GM12878 (cell line): ENCODE measurements at regions of chr5 and their contacts with region 1.

Region 1: GRCh38 chr5:149667084-149667828 is 62.9 kb upstream of the PPARGC1B start:
- DNase-seq: peak; percentile 38
- ATAC-seq: peak; percentile 90
- H3K4me3 ChIP-seq: no peak overlapping the region
- H3K27ac ChIP-seq: no peak overlapping the region
- H3K4me1 ChIP-seq: no peaks in the 10 kb centered on the region
- H3K27me3 ChIP-seq: no peaks in the 10 kb centered on the region; a peak in 1 of 4 replicates
- CTCF ChIP-seq: peak; percentile 74 to 95 (median 83)
- EP300 ChIP-seq: no peak
- POLR2A ChIP-seq: no peak
- RAD21 ChIP-seq: peak; percentile 75

Region 2: DNA sequence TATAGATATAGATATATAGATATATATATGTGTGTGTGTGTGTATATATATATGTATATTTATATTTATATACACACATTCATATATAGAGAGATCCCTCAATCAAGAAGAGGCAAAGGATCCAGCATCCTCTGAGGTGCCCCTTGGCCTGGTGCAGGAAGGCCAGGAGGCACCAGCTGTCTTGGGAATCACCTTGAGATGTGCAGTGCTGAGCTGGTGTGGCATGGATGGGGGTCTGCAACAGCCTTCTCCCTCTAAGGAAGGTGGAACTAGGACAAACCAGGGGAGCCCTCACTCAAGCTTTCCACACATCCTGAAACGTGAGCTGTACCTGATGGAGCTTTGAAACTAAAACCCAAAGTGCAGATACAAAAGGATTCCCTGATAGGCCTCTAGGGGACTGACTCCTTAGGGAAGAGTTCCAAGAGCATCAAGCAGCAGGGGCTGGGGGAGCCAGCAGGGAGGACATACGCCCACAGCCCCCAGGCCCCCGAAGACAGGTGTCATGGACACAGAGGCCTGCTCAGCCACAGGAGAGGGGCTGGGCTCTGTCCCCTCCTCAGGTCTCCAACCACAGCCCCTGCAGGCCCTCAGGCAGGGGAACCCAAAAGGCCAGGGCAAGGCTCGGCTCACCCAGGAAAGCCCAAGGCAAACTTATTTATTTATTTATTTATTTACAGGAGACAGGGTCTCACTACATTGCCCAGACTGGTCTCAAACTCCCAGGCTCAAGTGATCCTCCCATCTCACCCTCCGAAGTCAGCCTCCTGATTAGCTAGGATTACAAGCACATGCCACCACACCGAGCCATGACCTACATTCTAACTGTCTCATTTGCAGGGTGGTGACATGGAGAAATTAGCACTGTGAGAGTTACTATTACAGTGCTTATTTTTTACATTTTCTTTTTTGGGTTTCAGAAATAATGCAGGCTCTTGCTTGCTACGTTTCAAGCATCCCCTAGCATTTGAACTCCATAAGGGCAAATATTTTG is 68.2 kb before region 1 on chr5:
- CTCF ChIA-PET with region 1: no interaction called
- POLR2A ChIA-PET with region 1: no interaction called
- RAD21 ChIA-PET with region 1: no interaction called
- SMC1A ChIA-PET with region 1: no interaction called
- in situ Hi-C with region 1: no loop called
- intact Hi-C with region 1: no loop called
- DNase-seq: no peak
- ATAC-seq: no peak
- H3K4me3 ChIP-seq: no peak overlapping the region
- H3K27ac ChIP-seq: no peak overlapping the region
- H3K4me1 ChIP-seq: peaks cover 3% of the 10 kb centered on the region; the same call in 1 of the 2 replicates
- H3K27me3 ChIP-seq: no peaks in the 10 kb centered on the region
- CTCF ChIP-seq: no peak
- EP300 ChIP-seq: no peak
- POLR2A ChIP-seq: no peak
- RAD21 ChIP-seq: no peak

Region 3: DNA sequence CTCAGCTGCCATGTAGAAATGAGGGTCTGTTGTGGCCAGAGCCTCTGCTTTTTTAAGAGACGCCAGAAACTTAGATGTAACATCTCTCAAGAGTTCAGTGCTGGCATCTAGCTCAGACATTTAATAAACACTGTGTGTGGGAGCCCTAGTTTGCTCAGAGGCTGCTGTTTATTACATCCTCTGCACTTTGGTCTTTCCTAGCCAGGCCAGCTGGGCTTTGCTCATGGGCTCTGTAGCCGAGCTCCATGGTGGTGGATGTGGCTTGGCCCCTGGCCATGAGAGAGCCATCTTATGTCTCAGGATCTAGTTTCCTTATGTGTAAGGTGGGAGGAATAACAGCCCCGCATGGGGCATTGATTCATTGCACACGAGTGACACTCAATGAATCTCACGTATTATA is 55.9 kb before region 1 on chr5:
- CTCF ChIA-PET with region 1: no interaction called
- POLR2A ChIA-PET with region 1: no interaction called
- RAD21 ChIA-PET with region 1: no interaction called
- SMC1A ChIA-PET with region 1: no interaction called
- in situ Hi-C with region 1: no loop called
- intact Hi-C with region 1: no loop called
- DNase-seq: no peak
- ATAC-seq: no peak
- H3K4me3 ChIP-seq: no peak overlapping the region
- H3K27ac ChIP-seq: no peak overlapping the region
- H3K4me1 ChIP-seq: peaks cover 12% of the 10 kb centered on the region
- H3K27me3 ChIP-seq: no peaks in the 10 kb centered on the region
- CTCF ChIP-seq: no peak
- EP300 ChIP-seq: no peak
- POLR2A ChIP-seq: no peak
- RAD21 ChIP-seq: no peak

Region 4: GRCh38 chr5:149636851-149637246 is 30.4 kb before region 1 on chr5:
- CTCF ChIA-PET with region 1: interaction called, 14 read pairs
- POLR2A ChIA-PET with region 1: no interaction called
- RAD21 ChIA-PET with region 1: interaction called, 4 read pairs
- SMC1A ChIA-PET with region 1: interaction called, 8 read pairs
- in situ Hi-C with region 1: no loop called
- intact Hi-C with region 1: no loop called
- DNase-seq: no peak
- ATAC-seq: peak; percentile 85
- H3K4me3 ChIP-seq: no peak overlapping the region
- H3K27ac ChIP-seq: no peak overlapping the region
- H3K4me1 ChIP-seq: peaks cover 12% of the 10 kb centered on the region
- H3K27me3 ChIP-seq: no peaks in the 10 kb centered on the region
- CTCF ChIP-seq: peak; percentile 74 to 78 (median 77)
- EP300 ChIP-seq: no peak
- POLR2A ChIP-seq: no peak
- RAD21 ChIP-seq: peak; percentile 87

Region 5: DNA sequence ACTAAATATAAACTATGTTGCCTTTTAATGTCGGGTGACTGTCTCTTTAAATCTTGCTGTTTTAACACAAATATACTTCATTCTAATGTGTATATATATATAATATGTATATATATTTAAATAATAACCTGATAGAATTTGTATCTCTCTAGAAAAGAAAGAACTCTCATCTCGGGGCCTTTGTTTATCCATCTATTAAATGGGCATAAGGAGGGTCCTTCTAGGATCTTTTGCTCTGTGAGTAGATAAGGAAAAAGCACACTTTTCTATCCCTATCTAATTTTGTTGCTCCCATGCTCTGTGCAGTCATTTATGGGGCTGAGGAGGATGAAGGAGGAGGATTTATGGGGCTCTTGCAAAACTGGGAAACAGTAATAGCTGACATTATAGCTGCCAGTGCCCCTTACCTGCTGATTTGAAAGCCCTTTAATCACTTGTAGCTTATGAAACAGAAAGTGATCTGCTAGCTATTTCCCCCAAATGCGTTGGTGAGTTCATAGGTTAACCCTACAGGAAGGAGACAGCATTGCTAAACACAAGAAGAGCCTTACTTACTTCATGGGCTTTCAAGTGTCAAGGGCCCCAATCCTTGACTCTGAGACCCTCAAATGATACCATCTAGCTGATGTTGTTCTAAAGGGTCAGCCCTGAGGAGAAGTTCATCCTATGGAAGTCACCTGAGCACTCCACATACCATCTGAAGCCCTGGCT is 57.0 kb after region 1 on chr5:
- CTCF ChIA-PET with region 1: interaction called, 23 read pairs
- POLR2A ChIA-PET with region 1: no interaction called
- RAD21 ChIA-PET with region 1: interaction called, 9 read pairs
- SMC1A ChIA-PET with region 1: interaction called, 12 read pairs
- in situ Hi-C with region 1: no loop called
- intact Hi-C with region 1: no loop called
- DNase-seq: peak; percentile 43
- ATAC-seq: peak; percentile 97
- H3K4me3 ChIP-seq: no peak overlapping the region
- H3K27ac ChIP-seq: peak overlapping the region; percentile 52; the same call in 1 of the 2 replicates
- H3K4me1 ChIP-seq: peaks cover 6% of the 10 kb centered on the region
- H3K27me3 ChIP-seq: no peaks in the 10 kb centered on the region
- CTCF ChIP-seq: no peak
- EP300 ChIP-seq: no peak
- POLR2A ChIP-seq: no peak
- RAD21 ChIP-seq: no peak

Region 6: DNA sequence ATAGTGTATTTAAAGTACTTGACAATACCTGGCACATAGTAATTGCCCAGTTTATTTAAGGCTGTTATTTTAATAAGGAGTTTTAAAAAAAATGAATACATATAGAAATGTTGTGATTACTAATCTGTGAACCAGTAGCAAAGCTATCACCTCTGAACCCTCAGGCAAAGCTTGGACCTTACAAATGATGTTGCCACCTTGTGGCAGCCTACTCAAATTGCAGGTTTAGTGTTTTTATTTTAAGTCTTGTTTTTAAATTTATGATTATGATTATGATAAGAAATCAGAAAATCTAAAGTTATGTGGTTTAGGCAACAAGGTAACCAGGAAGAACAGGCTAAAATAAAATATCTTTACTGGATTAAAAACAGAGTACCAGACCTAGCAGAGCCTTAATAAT is 98.7 kb after region 1 on chr5:
- CTCF ChIA-PET with region 1: interaction called, 9 read pairs
- POLR2A ChIA-PET with region 1: no interaction called
- RAD21 ChIA-PET with region 1: no interaction called
- SMC1A ChIA-PET with region 1: interaction called, 16 read pairs
- in situ Hi-C with region 1: no loop called
- intact Hi-C with region 1: no loop called
- DNase-seq: no peak
- ATAC-seq: no peak
- H3K4me3 ChIP-seq: no peak overlapping the region
- H3K27ac ChIP-seq: no peak overlapping the region
- H3K4me1 ChIP-seq: peaks cover 4% of the 10 kb centered on the region; the same call in 1 of the 2 replicates
- H3K27me3 ChIP-seq: no peaks in the 10 kb centered on the region
- CTCF ChIP-seq: peak; percentile 6 to 52 (median 18); a peak in 3 of 6 replicates
- EP300 ChIP-seq: no peak
- POLR2A ChIP-seq: no peak
- RAD21 ChIP-seq: no peak

Region 7: DNA sequence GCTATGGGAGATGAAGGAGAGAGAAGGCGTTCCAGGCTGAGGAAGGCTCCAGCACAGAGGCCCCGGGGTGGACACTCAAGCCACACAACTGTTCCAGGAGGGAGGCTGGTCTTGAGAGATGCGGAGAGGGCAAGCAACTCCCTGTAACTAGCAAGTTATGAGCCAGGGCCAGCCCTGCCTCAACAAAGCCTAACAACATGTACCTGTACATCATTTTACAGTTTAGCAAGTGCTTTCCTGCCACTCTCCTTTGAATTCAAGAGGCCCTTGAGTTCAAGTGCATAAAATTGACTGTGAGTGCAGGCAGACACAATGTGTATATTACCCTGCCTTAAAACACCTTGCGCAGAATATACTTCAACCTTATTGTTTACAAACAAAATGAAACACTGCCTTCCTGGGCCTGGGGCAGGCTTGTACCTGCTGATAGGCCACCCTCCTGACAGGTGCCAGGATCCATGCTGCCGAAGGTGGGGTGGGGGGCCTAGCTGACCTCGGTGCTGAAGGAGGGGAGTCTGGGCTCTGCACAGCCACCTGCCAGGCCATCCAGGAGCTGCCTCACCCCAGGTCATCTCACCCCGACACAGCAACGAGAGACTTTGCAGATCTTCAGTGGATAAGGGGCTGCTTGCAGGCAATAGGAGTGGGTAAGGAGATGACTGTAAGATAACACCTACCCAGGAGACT is 142.8 kb after region 1 on chr5:
- CTCF ChIA-PET with region 1: interaction called, 19 read pairs
- POLR2A ChIA-PET with region 1: interaction called, 3 read pairs
- RAD21 ChIA-PET with region 1: interaction called, 26 read pairs
- SMC1A ChIA-PET with region 1: interaction called, 29 read pairs
- in situ Hi-C with region 1: no loop called
- intact Hi-C with region 1: no loop called
- DNase-seq: no peak
- ATAC-seq: no peak
- H3K4me3 ChIP-seq: no peak overlapping the region
- H3K27ac ChIP-seq: peak overlapping the region; percentile 55
- H3K4me1 ChIP-seq: peaks cover 43% of the 10 kb centered on the region
- H3K27me3 ChIP-seq: no peaks in the 10 kb centered on the region
- CTCF ChIP-seq: no peak
- EP300 ChIP-seq: no peak
- POLR2A ChIP-seq: no peak
- RAD21 ChIP-seq: no peak

Region 8: DNA sequence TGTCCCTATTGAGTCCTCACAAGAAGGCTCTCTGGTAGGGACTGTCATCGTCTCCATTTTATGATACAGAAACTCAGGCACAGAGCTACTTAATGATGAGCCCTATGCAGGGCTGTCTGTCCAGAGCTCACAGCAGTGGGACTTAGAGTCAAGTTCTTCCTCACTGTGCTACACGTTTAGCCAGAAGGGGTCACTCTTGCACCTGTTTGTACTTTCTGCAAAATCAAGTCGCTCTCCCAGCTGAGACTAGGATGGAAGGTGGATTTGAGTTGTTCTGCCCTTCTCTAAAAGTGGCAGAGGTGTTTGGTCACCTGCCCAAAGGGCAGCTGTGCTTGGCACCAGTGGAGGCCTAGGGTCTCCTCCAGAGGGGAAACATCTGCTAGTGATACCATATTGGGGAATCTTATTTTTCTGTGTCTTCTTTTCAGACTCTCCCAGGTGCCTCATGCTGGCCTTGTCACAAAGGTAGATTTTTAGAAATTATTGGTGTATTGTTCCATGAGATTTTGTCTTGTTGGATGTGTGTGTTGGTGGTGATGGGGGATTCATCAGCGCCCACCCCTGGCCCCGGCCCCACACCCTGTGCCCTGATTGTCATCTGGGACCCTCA is 167.1 kb after region 1 on chr5:
- CTCF ChIA-PET with region 1: interaction called, 349 read pairs
- POLR2A ChIA-PET with region 1: interaction called, 18 read pairs
- RAD21 ChIA-PET with region 1: interaction called, 91 read pairs
- SMC1A ChIA-PET with region 1: interaction called, 210 read pairs
- in situ Hi-C with region 1: loop called (anchors 5 kb)
- intact Hi-C with region 1: no loop called
- DNase-seq: no peak
- ATAC-seq: peak; percentile 55
- H3K4me3 ChIP-seq: no peak overlapping the region
- H3K27ac ChIP-seq: no peak overlapping the region
- H3K4me1 ChIP-seq: peaks cover 8% of the 10 kb centered on the region
- H3K27me3 ChIP-seq: no peaks in the 10 kb centered on the region
- CTCF ChIP-seq: peak; percentile 72 to 78 (median 75)
- EP300 ChIP-seq: no peak
- POLR2A ChIP-seq: no peak
- RAD21 ChIP-seq: peak; percentile 68